AG04450 (cell line): ENCODE measurements at regions of chr13 and their contacts with region 1.

Region 1: GRCh38 chr13:76886292-76887075 is at the start of gene KCTD12:
- DNase-seq: no peak
- H3K4me3 ChIP-seq: peak within 1 kb of the TSS; percentile 66
- H3K27ac ChIP-seq: no peak within 1 kb of the TSS
- H3K27me3 ChIP-seq: peaks cover 10% of the 10 kb centered on the region
- CTCF ChIP-seq: peak; percentile 19; the same call in 1 of the 2 replicates
- polyA plus RNA-seq, gene KCTD12: 2.0 and 2.3 TPM in 2 replicates

Region 2: GRCh38 chr13:76667551-76667950 is 218.9 kb before region 1 on chr13:
- CTCF ChIA-PET with region 1: interaction called, 37 read pairs
- POLR2A ChIA-PET with region 1: no interaction called
- DNase-seq: peak; percentile 29
- H3K4me3 ChIP-seq: no peak overlapping the region
- H3K27ac ChIP-seq: no peak overlapping the region
- H3K27me3 ChIP-seq: peaks cover 3% of the 10 kb centered on the region
- CTCF ChIP-seq: peak; percentile 63

Region 3: DNA sequence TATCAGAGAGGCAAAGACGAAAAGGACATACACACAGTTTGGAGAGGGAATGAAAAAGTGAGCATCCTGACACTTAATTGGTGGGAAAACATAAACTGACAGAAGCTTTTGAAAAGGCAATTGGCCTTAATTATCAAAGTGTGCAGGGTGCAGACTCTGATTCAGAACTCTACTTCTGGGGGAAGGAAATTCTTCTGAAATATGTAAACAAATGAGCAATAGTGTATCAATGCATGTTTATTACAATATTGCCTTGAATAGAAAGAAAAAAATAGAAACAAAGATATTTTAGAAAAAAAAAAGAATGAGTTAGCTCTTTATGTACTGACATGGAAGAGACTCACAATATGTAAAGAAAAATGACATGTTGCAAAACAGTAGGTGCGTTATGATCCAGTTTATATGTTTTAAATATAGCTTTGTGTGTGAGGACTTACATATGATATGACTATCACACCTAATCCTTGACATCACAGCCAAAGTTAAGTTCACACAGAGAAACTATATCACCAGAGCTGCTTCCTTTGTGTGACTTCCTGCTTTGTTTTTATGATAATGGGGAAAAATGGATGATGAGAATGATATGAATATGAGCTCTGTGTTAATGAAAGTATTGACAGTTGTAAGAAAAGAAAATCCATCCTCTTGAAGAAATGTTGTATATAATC is 182.7 kb before region 1 on chr13:
- CTCF ChIA-PET with region 1: interaction called, 10 read pairs
- POLR2A ChIA-PET with region 1: no interaction called
- DNase-seq: no peak
- H3K4me3 ChIP-seq: no peak overlapping the region
- H3K27ac ChIP-seq: no peak overlapping the region
- H3K27me3 ChIP-seq: no peaks in the 10 kb centered on the region
- CTCF ChIP-seq: no peak

Region 4: GRCh38 chr13:77338961-77339401 is 452.5 kb after region 1 on chr13:
- CTCF ChIA-PET with region 1: no interaction called
- POLR2A ChIA-PET with region 1: no interaction called
- DNase-seq: no peak
- H3K4me3 ChIP-seq: no peak overlapping the region
- H3K27ac ChIP-seq: no peak overlapping the region
- H3K27me3 ChIP-seq: peaks cover 22% of the 10 kb centered on the region
- CTCF ChIP-seq: no peak